ENCODE measurements at regions of chr11 and their contacts with region 1.

Region 1: GRCh38 chr11:7436657-7437056 is 48.6 kb upstream of the OLFML1 start:
- DNase-seq: no peak
- ATAC-seq: peak in 3 of 4 donors; percentile 22 to 67 (median 57)
- H3K4me3 ChIP-seq: no peak overlapping the region
- H3K27ac ChIP-seq: peak overlapping the region in 1 of 12 donors; percentile 40
- H3K4me1 ChIP-seq: peaks cover 0 to 35% (median 0%) of the 10 kb centered on the region in 12 donors
- H3K27me3 ChIP-seq: no peaks in the 10 kb centered on the region
- CTCF ChIP-seq: no peak
- POLR2A ChIP-seq: no peak

Region 2: DNA sequence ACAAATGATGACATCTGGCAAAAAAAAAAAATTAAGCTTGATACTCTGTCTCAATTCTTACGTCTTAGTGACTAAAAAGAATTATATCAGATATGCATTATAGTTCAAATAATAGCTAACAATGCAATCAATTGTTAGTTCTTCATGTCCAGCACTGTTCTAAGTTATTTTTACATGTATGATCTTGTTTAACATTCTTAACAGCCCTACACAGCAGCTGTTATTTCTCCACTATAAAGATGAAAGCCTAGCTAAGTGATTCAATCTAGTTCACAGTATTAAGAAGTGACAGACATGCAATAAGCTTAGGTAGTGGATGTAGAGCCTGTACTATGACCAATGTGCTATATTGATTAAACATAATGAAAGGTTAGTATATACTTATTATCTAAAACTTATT is 420.6 kb before region 1 on chr11:
- intact Hi-C with region 1: no loop called
- DNase-seq: no peak
- ATAC-seq: no peak
- H3K4me3 ChIP-seq: no peak overlapping the region
- H3K27ac ChIP-seq: no peak overlapping the region
- H3K4me1 ChIP-seq: peaks cover 0 to 14% (median 6%) of the 10 kb centered on the region in 12 donors
- H3K27me3 ChIP-seq: peaks cover 0 to 6% (median 0%) of the 10 kb centered on the region in 9 donors
- CTCF ChIP-seq: no peak
- POLR2A ChIP-seq: no peak

Region 3: DNA sequence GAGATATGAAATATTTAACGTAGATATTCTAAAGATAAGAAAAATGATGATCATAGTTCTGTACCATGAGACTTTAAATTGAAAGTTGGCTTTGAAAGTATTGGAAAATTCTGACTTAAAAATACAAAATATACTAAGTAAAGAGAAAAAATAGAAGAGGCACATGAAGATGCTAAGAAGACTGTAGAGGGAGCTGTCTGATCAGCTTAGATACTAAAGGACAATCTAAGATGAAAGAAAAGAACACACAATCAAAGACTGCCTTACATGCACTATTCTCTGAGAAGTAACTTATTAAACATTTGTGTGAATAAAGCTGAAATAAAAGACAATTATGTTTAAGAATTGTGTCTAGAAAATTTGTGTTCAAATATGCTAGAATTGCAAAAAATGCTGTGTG is 292.7 kb before region 1 on chr11:
- intact Hi-C with region 1: loop called in 2 of 10 experiments (anchors 2 to 5 kb)
- DNase-seq: no peak
- ATAC-seq: no peak
- H3K4me3 ChIP-seq: no peak overlapping the region
- H3K27ac ChIP-seq: no peak overlapping the region
- H3K4me1 ChIP-seq: no peaks in the 10 kb centered on the region
- H3K27me3 ChIP-seq: peaks cover 0 to 5% (median 0%) of the 10 kb centered on the region in 9 donors
- CTCF ChIP-seq: peak in 9 of 12 donors; percentile 8 to 50 (median 37)
- POLR2A ChIP-seq: no peak

Region 4: GRCh38 chr11:7457211-7457610 is 20.6 kb after region 1 on chr11:
- intact Hi-C with region 1: no loop called
- DNase-seq: no peak
- ATAC-seq: no peak
- H3K4me3 ChIP-seq: no peak overlapping the region
- H3K27ac ChIP-seq: no peak overlapping the region
- H3K4me1 ChIP-seq: no peaks in the 10 kb centered on the region
- H3K27me3 ChIP-seq: no peaks in the 10 kb centered on the region
- CTCF ChIP-seq: no peak
- POLR2A ChIP-seq: no peak

Region 5: GRCh38 chr11:7490054-7490453 is 53.4 kb after region 1 on chr11:
- intact Hi-C with region 1: no loop called
- DNase-seq: no peak
- ATAC-seq: peak in 2 of 4 donors; percentile 54 to 77
- H3K4me3 ChIP-seq: no peak overlapping the region
- H3K27ac ChIP-seq: peak overlapping the region in 1 of 12 donors; percentile 1
- H3K4me1 ChIP-seq: peaks cover 0 to 25% (median 7%) of the 10 kb centered on the region in 12 donors
- H3K27me3 ChIP-seq: no peaks in the 10 kb centered on the region
- CTCF ChIP-seq: no peak
- POLR2A ChIP-seq: no peak

Measured in heart left ventricle (tissue), 16 donors.